ENCODE measurements at regions of chr10 and their contacts with region 1.

Region 1: DNA sequence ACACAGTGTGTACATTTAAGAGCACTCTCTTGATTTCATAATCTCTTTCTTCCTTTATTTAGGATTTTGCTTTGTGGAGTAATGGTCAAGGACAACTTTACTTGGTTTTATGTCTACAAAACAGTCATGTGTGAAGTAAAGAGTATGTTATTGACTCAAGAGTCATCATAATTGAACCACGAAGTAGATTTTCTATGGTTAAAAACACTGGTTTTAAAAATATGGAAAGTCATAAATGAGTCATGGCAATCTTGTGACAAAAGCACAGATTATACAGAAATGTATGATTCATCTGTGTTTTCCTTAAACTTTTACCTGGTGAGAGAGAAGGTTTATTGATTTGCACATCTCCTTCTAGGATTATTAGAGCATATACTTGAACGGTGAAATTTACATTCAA is 969.7 kb downstream of the GATA3 start:
- DNase-seq: no peak
- H3K4me3 Mint-ChIP-seq: no peak overlapping the region
- H3K27ac Mint-ChIP-seq: peak overlapping the region; percentile 6
- H3K4me1 Mint-ChIP-seq: peaks cover 7% of the 10 kb centered on the region
- H3K27me3 Mint-ChIP-seq: peaks cover 7% of the 10 kb centered on the region

Region 2: GRCh38 chr10:9081961-9082360 is 57.8 kb after region 1 on chr10:
- intact Hi-C with region 1: loop called (anchors 2 kb)
- DNase-seq: no peak
- H3K4me3 Mint-ChIP-seq: no peak overlapping the region
- H3K27ac Mint-ChIP-seq: no peak overlapping the region
- H3K4me1 Mint-ChIP-seq: no peaks in the 10 kb centered on the region
- H3K27me3 Mint-ChIP-seq: peaks cover 6% of the 10 kb centered on the region

Measured in activated T-helper 1 cell treated with anti-CD3 and anti-CD28 coated beads, Interleukin-12 subunit alpha, Interleukin-12 subunit beta, Interleukin-2, Interleukin-4 antibody, amounts not matched to agents 30 ng/mL and 10 ng/mL and 1 ng/mL, durations not matched to agents 14 hours and 24 hours and 36 hours (primary cell).